GM18951 (cell line): ENCODE measurements at regions of chr14 and their contacts with region 1.

Region 1: GRCh38 chr14:67583711-67584644 is 16.1 kb downstream of the PIGH start:
- POLR2A ChIP-seq: no peak

Region 2: GRCh38 chr14:67666750-67667449 is 82.9 kb after region 1 on chr14:
- in situ Hi-C with region 1: loop called (anchors 10 kb)
- POLR2A ChIP-seq: no peak

Region 3: DNA sequence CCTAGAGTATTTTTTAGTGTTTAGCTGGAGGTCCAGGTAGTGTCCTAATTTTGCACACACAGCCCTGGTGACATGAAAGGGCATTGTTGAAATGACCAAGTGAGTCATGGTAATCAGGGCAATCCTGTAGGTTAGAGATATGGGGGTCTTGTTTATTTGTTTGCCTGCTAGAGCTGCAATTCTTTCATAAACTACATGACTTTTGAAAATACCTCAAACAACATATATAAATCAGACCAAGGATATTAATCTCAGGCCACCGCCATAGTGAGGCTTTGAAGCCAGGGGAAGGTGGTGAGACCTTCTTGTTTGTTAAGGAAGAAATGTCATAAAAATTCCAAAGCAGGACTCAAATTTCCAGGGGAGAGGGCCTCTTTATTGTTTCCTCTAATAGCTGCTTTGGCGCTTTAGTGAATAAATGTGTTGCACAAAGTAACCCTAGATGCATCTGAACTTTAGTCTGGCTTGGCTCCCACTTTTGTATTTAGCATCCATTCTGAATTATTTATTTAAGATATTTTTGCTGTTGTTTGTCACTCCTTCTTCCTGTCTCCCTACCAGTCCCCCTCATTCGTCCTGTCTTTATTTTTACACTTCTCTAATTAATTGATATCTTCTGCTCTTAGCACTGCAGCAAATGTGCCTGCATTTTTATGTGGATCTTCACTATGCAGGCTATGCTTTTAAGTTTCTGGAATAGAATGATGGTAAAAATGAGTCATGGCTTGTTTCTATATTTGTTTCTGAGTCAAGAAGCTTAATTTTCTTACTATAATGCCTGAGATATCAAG is 665.9 kb after region 1 on chr14:
- in situ Hi-C with region 1: no loop called
- POLR2A ChIP-seq: no peak